ENCODE measurements at regions of chr2 and their contacts with region 1.

Region 1: DNA sequence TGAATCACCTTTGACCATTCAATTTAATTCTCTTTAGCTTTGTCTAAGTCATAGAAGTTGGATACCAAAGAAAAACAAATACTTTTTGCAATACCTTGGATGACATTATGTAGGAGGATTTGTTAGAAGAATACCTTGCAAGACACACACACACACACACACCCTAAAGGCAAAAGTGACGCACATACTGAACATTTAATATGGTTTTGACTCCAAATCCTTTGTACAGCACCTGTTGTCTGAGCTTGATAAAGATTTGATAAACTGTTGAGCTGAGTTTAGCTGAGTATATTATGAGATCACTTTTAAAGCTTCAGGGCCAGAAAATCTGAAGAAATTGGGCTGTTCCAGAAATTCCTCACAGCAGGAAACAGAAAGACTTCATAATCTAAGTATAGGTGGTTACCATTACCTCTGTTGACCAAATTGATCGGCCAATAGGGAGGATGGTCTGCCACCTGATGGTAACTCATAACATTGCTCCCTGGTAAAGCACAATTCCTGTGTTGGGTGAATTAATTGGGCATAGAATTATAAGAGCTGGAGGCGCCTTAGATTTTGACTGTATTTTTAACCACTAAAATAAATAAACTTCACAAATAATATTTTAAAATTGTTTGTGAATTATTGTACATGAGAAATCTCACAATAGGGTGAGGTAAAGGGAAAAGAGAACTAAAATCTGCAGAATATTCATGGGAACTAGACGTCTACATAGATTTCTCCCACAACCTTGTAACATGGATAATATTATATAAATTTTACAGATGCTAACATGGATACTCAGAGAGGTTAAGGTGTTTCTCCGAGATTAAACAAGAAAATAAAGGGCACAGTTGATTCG is 21.9 kb upstream of the RPIA start:
- DNase-seq: peak; percentile 32
- ATAC-seq: peak; percentile 93
- H3K4me3 ChIP-seq: no peak overlapping the region
- H3K27ac ChIP-seq: no peak overlapping the region
- H3K4me1 ChIP-seq: no peaks in the 10 kb centered on the region
- H3K27me3 ChIP-seq: no peaks in the 10 kb centered on the region
- CTCF ChIP-seq: peak; percentile 64 to 80 (median 74); a peak in 5 of 6 replicates
- EP300 ChIP-seq: no peak
- POLR2A ChIP-seq: no peak
- RAD21 ChIP-seq: peak; percentile 94

Region 2: DNA sequence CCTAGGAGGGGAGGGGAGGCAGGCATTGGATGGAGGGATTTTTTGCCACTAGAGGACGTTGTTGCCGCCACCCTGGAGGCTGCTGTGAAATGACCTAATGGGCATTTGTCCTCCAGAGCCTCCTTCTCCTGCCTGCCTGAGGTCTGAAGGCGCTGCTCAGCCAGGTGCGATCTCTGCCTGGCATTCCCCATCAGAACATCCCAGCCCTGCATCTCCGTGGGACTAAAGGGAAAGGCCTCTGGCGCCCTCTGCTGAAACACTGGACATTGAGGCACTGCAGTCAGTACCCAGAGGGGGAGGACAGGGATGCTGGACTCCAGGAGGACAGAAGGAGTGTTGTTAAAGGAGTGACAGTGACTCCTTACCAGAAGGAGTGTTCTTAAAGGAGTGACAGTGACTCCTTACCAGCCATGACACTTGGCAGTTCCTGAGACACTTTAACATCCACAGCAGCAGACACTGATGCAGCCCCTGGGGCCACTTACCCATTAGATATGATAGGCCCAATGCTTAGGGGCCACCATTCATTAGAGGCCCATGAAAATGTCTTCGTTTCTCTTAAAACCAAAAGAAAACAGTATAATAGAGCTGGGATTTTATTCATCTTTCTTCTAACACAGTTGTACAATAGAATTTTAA is 482.4 kb before region 1 on chr2:
- CTCF ChIA-PET with region 1: interaction called, 18 read pairs
- POLR2A ChIA-PET with region 1: no interaction called
- RAD21 ChIA-PET with region 1: interaction called, 4 read pairs
- SMC1A ChIA-PET with region 1: interaction called, 4 read pairs
- in situ Hi-C with region 1: loop called (anchors 5 kb)
- intact Hi-C with region 1: loop called (anchors 5 kb)
- DNase-seq: no peak
- ATAC-seq: peak; percentile 60
- H3K4me3 ChIP-seq: no peak overlapping the region
- H3K27ac ChIP-seq: no peak overlapping the region
- H3K4me1 ChIP-seq: no peaks in the 10 kb centered on the region
- H3K27me3 ChIP-seq: no peaks in the 10 kb centered on the region; a peak in 1 of 4 replicates
- CTCF ChIP-seq: peak; percentile 45 to 60 (median 59)
- EP300 ChIP-seq: no peak
- POLR2A ChIP-seq: no peak
- RAD21 ChIP-seq: peak; percentile 38; the same call in 1 of the 2 replicates

Region 3: DNA sequence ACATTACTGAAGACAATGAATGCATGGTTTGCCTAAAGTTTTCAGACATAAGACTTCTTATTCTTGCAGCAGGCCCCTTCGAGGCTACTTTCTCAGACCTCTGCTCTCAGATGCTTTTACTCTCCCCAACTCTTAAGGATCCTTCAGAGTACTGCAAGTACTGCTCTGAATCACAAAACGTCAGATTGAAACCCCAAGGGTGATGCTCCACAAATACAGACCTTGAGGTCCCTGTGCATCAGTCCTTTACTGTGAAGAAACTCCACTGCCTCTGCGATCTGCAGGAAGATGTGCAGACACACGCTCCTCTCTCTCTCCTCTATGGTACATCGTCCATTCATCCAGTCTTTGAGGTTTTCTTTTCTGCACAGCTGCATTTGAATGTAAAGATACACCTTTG is 95.1 kb before region 1 on chr2:
- CTCF ChIA-PET with region 1: interaction called, 11 read pairs
- POLR2A ChIA-PET with region 1: no interaction called
- RAD21 ChIA-PET with region 1: interaction called, 7 read pairs
- SMC1A ChIA-PET with region 1: interaction called, 38 read pairs
- in situ Hi-C with region 1: no loop called
- intact Hi-C with region 1: no loop called
- DNase-seq: no peak
- ATAC-seq: peak; percentile 56; the same call in 2 of the 3 replicates
- H3K4me3 ChIP-seq: no peak overlapping the region
- H3K27ac ChIP-seq: no peak overlapping the region
- H3K4me1 ChIP-seq: peaks cover 10% of the 10 kb centered on the region; the same call in 1 of the 2 replicates
- H3K27me3 ChIP-seq: no peaks in the 10 kb centered on the region
- CTCF ChIP-seq: no peak
- EP300 ChIP-seq: no peak
- POLR2A ChIP-seq: no peak
- RAD21 ChIP-seq: no peak

Region 4: GRCh38 chr2:88606371-88607030 is 63.1 kb before region 1 on chr2:
- CTCF ChIA-PET with region 1: interaction called, 10 read pairs
- POLR2A ChIA-PET with region 1: no interaction called
- RAD21 ChIA-PET with region 1: interaction called, 21 read pairs
- SMC1A ChIA-PET with region 1: interaction called, 21 read pairs
- in situ Hi-C with region 1: no loop called
- intact Hi-C with region 1: no loop called
- DNase-seq: peak; percentile 68
- ATAC-seq: peak; percentile 87
- H3K4me3 ChIP-seq: no peak overlapping the region
- H3K27ac ChIP-seq: peak overlapping the region; percentile 66
- H3K4me1 ChIP-seq: peaks cover 51% of the 10 kb centered on the region
- H3K27me3 ChIP-seq: no peaks in the 10 kb centered on the region
- CTCF ChIP-seq: no peak
- EP300 ChIP-seq: peak in 1 of 2 experiments; percentile 99; a peak in 3 of 4 replicates
- POLR2A ChIP-seq: no peak
- RAD21 ChIP-seq: no peak

Region 5: GRCh38 chr2:88641330-88641729 is 28.3 kb before region 1 on chr2:
- CTCF ChIA-PET with region 1: interaction called, 37 read pairs
- POLR2A ChIA-PET with region 1: no interaction called
- RAD21 ChIA-PET with region 1: interaction called, 6 read pairs
- SMC1A ChIA-PET with region 1: interaction called, 4 read pairs
- in situ Hi-C with region 1: no loop called
- intact Hi-C with region 1: no loop called
- DNase-seq: no peak
- ATAC-seq: no peak
- H3K4me3 ChIP-seq: no peak overlapping the region
- H3K27ac ChIP-seq: no peak overlapping the region
- H3K4me1 ChIP-seq: peaks cover 7% of the 10 kb centered on the region; the same call in 1 of the 2 replicates
- H3K27me3 ChIP-seq: no peaks in the 10 kb centered on the region
- CTCF ChIP-seq: no peak
- EP300 ChIP-seq: no peak
- POLR2A ChIP-seq: no peak
- RAD21 ChIP-seq: no peak

Region 6: GRCh38 chr2:88691339-88692183 is 22.0 kb after region 1 on chr2 and contains the start of gene RPIA:
- CTCF ChIA-PET with region 1: interaction called, 13 read pairs
- POLR2A ChIA-PET with region 1: interaction called, 6 read pairs
- RAD21 ChIA-PET with region 1: interaction called, 11 read pairs
- SMC1A ChIA-PET with region 1: interaction called, 4 read pairs
- in situ Hi-C with region 1: no loop called
- intact Hi-C with region 1: no loop called
- DNase-seq: peak; percentile 94
- ATAC-seq: peak; percentile 92
- H3K4me3 ChIP-seq: peak within 1 kb of the TSS; percentile 98
- H3K27ac ChIP-seq: peak within 1 kb of the TSS; percentile 76
- H3K4me1 ChIP-seq: peaks cover 3% of the 10 kb centered on the region
- H3K27me3 ChIP-seq: no peaks in the 10 kb centered on the region
- CTCF ChIP-seq: peak; percentile 58 to 81 (median 80)
- EP300 ChIP-seq: no peak
- POLR2A ChIP-seq: peak; percentile 87
- RAD21 ChIP-seq: no peak
- polyA plus RNA-seq, gene RPIA: 9.4 to 17.7 TPM

Region 7: GRCh38 chr2:88747990-88748389 is 78.4 kb after region 1 on chr2:
- CTCF ChIA-PET with region 1: no interaction called
- POLR2A ChIA-PET with region 1: no interaction called
- RAD21 ChIA-PET with region 1: no interaction called
- SMC1A ChIA-PET with region 1: no interaction called
- in situ Hi-C with region 1: no loop called
- intact Hi-C with region 1: no loop called
- DNase-seq: no peak
- ATAC-seq: no peak
- H3K4me3 ChIP-seq: no peak overlapping the region
- H3K27ac ChIP-seq: no peak overlapping the region
- H3K4me1 ChIP-seq: no peaks in the 10 kb centered on the region
- H3K27me3 ChIP-seq: no peaks in the 10 kb centered on the region
- CTCF ChIP-seq: no peak
- EP300 ChIP-seq: no peak
- POLR2A ChIP-seq: no peak
- RAD21 ChIP-seq: no peak

Measured in GM12878 (cell line).